HepG2 (cell line): ENCODE measurements at regions of chr10 and their contacts with region 1.

Region 1: DNA sequence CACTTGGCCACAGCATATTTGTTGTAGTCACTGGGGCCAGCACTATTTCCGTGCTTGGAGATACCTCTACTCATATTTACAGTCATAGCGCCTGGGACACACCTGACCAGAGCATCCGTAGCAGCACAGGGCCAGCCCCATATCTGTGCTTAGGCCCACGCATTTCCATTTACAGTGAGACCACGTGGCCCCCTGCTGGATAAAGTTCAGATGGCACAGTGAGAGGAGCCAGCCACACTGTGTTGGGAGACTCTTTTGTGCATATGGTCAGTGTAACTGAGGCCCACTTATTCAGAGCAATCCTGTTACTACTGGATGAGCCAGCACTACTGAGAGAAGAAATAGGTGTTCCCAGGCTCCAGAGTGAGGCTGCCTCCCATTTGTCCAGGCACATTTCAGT is 455.3 kb downstream of the REEP3 start:
- DNase-seq: peak; percentile 29
- ATAC-seq: peak; percentile 99
- H3K4me3 ChIP-seq: no peak overlapping the region
- H3K27ac ChIP-seq: no peak overlapping the region
- H3K4me1 ChIP-seq: no peaks in the 10 kb centered on the region
- H3K27me3 ChIP-seq: no peaks in the 10 kb centered on the region; a peak in 1 of 5 replicates
- CTCF ChIP-seq: peak; percentile 82
- EP300 ChIP-seq: no peak
- POLR2A ChIP-seq: no peak
- RAD21 ChIP-seq: no peak

Region 2: DNA sequence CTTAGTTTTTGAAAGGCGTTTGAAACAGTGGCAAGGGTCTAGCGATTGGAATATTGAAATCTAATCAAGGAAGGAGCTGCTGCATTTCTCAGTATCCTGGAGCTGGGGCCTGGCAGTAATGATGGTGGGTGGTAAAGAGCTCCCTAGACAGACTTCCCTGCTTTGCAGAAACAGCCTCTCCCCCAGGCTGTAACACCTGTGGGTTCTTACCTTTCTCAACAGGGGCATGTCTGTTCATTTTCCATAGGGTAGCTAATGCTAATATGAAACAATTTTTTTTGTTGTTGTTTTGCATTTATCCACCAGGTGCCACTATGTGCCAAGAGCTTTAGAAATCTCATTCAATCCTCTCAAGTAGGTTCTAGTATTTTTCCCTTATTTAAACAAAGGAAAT is 109.8 kb before region 1 on chr10:
- CTCF ChIA-PET with region 1: interaction called, 17 read pairs
- POLR2A ChIA-PET with region 1: no interaction called
- in situ Hi-C with region 1: loop called (anchors 10 kb)
- intact Hi-C with region 1: no loop called
- DNase-seq: peak; percentile 3
- ATAC-seq: peak; percentile 78
- H3K4me3 ChIP-seq: no peak overlapping the region
- H3K27ac ChIP-seq: no peak overlapping the region
- H3K4me1 ChIP-seq: no peaks in the 10 kb centered on the region
- H3K27me3 ChIP-seq: 0 out of 5 replicates have a peak, but pooled peaks cover 0 to 4% of the 10 kb centered on the region in 2 experiments
- CTCF ChIP-seq: no peak
- EP300 ChIP-seq: no peak
- POLR2A ChIP-seq: no peak
- RAD21 ChIP-seq: no peak

Region 3: GRCh38 chr10:63878428-63878827 is 98.1 kb before region 1 on chr10:
- CTCF ChIA-PET with region 1: interaction called, 17 read pairs
- POLR2A ChIA-PET with region 1: no interaction called
- in situ Hi-C with region 1: loop called (anchors 10 kb)
- intact Hi-C with region 1: no loop called
- DNase-seq: no peak
- ATAC-seq: no peak
- H3K4me3 ChIP-seq: no peak overlapping the region
- H3K27ac ChIP-seq: no peak overlapping the region
- H3K4me1 ChIP-seq: no peaks in the 10 kb centered on the region
- H3K27me3 ChIP-seq: no peaks in the 10 kb centered on the region
- CTCF ChIP-seq: no peak
- EP300 ChIP-seq: no peak
- POLR2A ChIP-seq: no peak
- RAD21 ChIP-seq: no peak

Region 4: GRCh38 chr10:63965846-63966245 is 10.7 kb before region 1 on chr10:
- CTCF ChIA-PET with region 1: no interaction called
- POLR2A ChIA-PET with region 1: no interaction called
- in situ Hi-C with region 1: no loop called
- intact Hi-C with region 1: no loop called
- DNase-seq: no peak
- ATAC-seq: no peak
- H3K4me3 ChIP-seq: no peak overlapping the region
- H3K27ac ChIP-seq: no peak overlapping the region
- H3K4me1 ChIP-seq: no peaks in the 10 kb centered on the region
- H3K27me3 ChIP-seq: no peaks in the 10 kb centered on the region
- CTCF ChIP-seq: no peak
- EP300 ChIP-seq: no peak
- POLR2A ChIP-seq: no peak
- RAD21 ChIP-seq: no peak

Region 5: GRCh38 chr10:64182671-64183070 is 206.1 kb after region 1 on chr10:
- CTCF ChIA-PET with region 1: no interaction called
- POLR2A ChIA-PET with region 1: no interaction called
- in situ Hi-C with region 1: no loop called
- intact Hi-C with region 1: no loop called
- DNase-seq: no peak
- ATAC-seq: no peak
- H3K4me3 ChIP-seq: no peak overlapping the region
- H3K27ac ChIP-seq: no peak overlapping the region
- H3K4me1 ChIP-seq: no peaks in the 10 kb centered on the region
- H3K27me3 ChIP-seq: no peaks in the 10 kb centered on the region
- CTCF ChIP-seq: no peak
- EP300 ChIP-seq: no peak
- POLR2A ChIP-seq: no peak
- RAD21 ChIP-seq: no peak

Region 6: GRCh38 chr10:64426745-64427144 is 450.2 kb after region 1 on chr10:
- CTCF ChIA-PET with region 1: no interaction called
- POLR2A ChIA-PET with region 1: no interaction called
- in situ Hi-C with region 1: no loop called
- intact Hi-C with region 1: no loop called
- DNase-seq: no peak
- ATAC-seq: no peak
- H3K4me3 ChIP-seq: no peak overlapping the region
- H3K27ac ChIP-seq: no peak overlapping the region
- H3K4me1 ChIP-seq: no peaks in the 10 kb centered on the region
- H3K27me3 ChIP-seq: no peaks in the 10 kb centered on the region
- CTCF ChIP-seq: no peak
- EP300 ChIP-seq: no peak
- POLR2A ChIP-seq: no peak
- RAD21 ChIP-seq: no peak